Stomach (tissue), 19 donors: ENCODE measurements at regions of chr6 and their contacts with region 1.

Region 1: GRCh38 chr6:70566751-70567382 is at the start of gene SDHAF4:
- DNase-seq: peak; percentile 94 to 97
- H3K4me3 ChIP-seq: peak within 1 kb of the TSS; percentile 68 to 90 (median 80)
- H3K27ac ChIP-seq: peak within 1 kb of the TSS; percentile 89 to 93 (median 91)
- H3K4me1 ChIP-seq: peaks cover 7 to 32% (median 16%) of the 10 kb centered on the region in 4 donors
- H3K27me3 ChIP-seq: no peaks in the 10 kb centered on the region
- CTCF ChIP-seq: no peak
- EP300 ChIP-seq: no peak
- POLR2A ChIP-seq: peak in 1 of 4 donors; percentile 33
- total RNA-seq, gene SDHAF4: 3.2 to 16.3 (median 6.2) TPM in 4 of 5 donors, not detected in the other

Region 2: GRCh38 chr6:70673601-70674000 is 106.7 kb after region 1 on chr6:
- intact Hi-C with region 1: loop called (anchors 10 kb)
- DNase-seq: no peak
- H3K4me3 ChIP-seq: no peak overlapping the region
- H3K27ac ChIP-seq: no peak overlapping the region
- H3K4me1 ChIP-seq: peaks cover 14 to 75% (median 54%) of the 10 kb centered on the region in 4 donors
- H3K27me3 ChIP-seq: no peaks in the 10 kb centered on the region
- CTCF ChIP-seq: no peak
- EP300 ChIP-seq: no peak
- POLR2A ChIP-seq: no peak